Caco-2 (cell line): ENCODE measurements at regions of chr1 and their contacts with region 1.

Region 1: GRCh38 chr1:236753516-236753915 is 41.6 kb upstream of the MTR start:
- DNase-seq: peak; percentile 50 to 53
- H3K4me3 ChIP-seq: no peak overlapping the region
- H3K4me3 Mint-ChIP-seq: no peak overlapping the region
- H3K27ac Mint-ChIP-seq: no peak overlapping the region
- H3K4me1 ChIP-seq: no peaks in the 10 kb centered on the region
- H3K4me1 Mint-ChIP-seq: no peaks in the 10 kb centered on the region
- H3K27me3 ChIP-seq: no peaks in the 10 kb centered on the region
- H3K27me3 Mint-ChIP-seq: peaks cover 5% of the 10 kb centered on the region
- CTCF ChIP-seq: peak; percentile 24 to 32

Region 2: GRCh38 chr1:236741753-236742152 is 11.8 kb before region 1 on chr1:
- CTCF ChIA-PET with region 1: no interaction called
- POLR2A ChIA-PET with region 1: no interaction called
- intact Hi-C with region 1: no loop called
- DNase-seq: no peak
- H3K4me3 ChIP-seq: no peak overlapping the region
- H3K4me3 Mint-ChIP-seq: no peak overlapping the region
- H3K27ac Mint-ChIP-seq: no peak overlapping the region
- H3K4me1 ChIP-seq: no peaks in the 10 kb centered on the region
- H3K4me1 Mint-ChIP-seq: no peaks in the 10 kb centered on the region
- H3K27me3 ChIP-seq: no peaks in the 10 kb centered on the region
- H3K27me3 Mint-ChIP-seq: no peaks in the 10 kb centered on the region
- CTCF ChIP-seq: no peak

Region 3: DNA sequence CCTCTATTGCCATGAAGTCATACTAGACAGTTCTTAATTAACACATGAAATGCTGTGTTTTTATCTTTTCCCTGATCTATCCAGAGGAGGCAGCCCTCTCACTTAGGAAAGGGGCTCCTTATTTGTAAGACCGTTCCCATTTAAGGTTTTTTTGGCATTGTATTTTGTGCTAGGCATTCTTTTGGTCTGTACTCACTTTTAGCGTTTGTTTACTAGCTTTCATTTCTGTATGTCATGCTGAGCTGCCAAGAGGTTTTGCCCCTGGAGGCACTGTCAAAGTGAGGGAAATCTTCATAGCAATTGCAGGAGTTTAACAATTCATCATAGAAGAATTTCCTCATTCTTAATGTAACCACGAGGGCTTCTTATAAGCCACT is 101.1 kb after region 1 on chr1:
- CTCF ChIA-PET with region 1: no interaction called
- POLR2A ChIA-PET with region 1: no interaction called
- intact Hi-C with region 1: no loop called
- DNase-seq: no peak
- H3K4me3 ChIP-seq: no peak overlapping the region
- H3K4me3 Mint-ChIP-seq: no peak overlapping the region
- H3K27ac Mint-ChIP-seq: no peak overlapping the region
- H3K4me1 ChIP-seq: no peaks in the 10 kb centered on the region
- H3K4me1 Mint-ChIP-seq: no peaks in the 10 kb centered on the region
- H3K27me3 ChIP-seq: no peaks in the 10 kb centered on the region
- H3K27me3 Mint-ChIP-seq: no peaks in the 10 kb centered on the region
- CTCF ChIP-seq: no peak

Region 4: DNA sequence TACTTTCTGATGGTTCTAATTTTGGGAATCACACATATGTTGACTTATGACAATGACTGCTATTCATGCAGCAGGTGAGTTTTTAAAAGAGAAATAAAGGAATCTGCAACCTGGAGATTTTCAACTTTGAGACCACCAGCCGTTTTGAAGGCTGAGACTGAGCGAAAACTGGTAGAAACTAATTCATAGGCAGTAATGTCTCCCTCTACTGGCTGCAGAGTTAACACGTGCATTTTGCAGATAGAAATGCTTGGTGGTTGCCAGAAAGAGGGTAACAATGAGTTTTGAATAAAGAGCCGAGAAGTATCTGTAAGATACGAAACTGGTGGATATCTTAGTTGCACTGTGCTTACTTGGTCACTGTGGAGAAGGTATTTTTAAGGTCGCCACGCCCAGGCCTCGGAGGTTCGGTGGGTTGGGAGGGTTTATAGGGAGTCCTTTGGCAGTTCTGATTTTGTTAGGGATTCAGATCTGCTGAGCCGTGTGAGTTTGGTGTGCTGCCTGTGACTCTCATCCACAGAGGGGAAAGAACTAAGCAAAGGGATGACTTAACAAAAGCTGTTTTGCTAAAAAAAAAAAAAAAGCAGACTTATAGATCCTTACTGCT is 371.4 kb after region 1 on chr1:
- CTCF ChIA-PET with region 1: no interaction called
- POLR2A ChIA-PET with region 1: no interaction called
- intact Hi-C with region 1: loop called (anchors 1 kb)
- DNase-seq: peak in 1 of 2 experiments; percentile 13
- H3K4me3 ChIP-seq: no peak overlapping the region
- H3K4me3 Mint-ChIP-seq: no peak overlapping the region
- H3K27ac Mint-ChIP-seq: no peak overlapping the region
- H3K4me1 ChIP-seq: no peaks in the 10 kb centered on the region
- H3K4me1 Mint-ChIP-seq: no peaks in the 10 kb centered on the region
- H3K27me3 ChIP-seq: no peaks in the 10 kb centered on the region
- H3K27me3 Mint-ChIP-seq: peaks cover 3% of the 10 kb centered on the region
- CTCF ChIP-seq: peak in 1 of 2 experiments; percentile 41

Region 5: GRCh38 chr1:237562242-237562823 is 808.8 kb after region 1 on chr1:
- CTCF ChIA-PET with region 1: interaction called, 5 read pairs
- POLR2A ChIA-PET with region 1: no interaction called
- intact Hi-C with region 1: loop called (anchors 5 kb)
- DNase-seq: peak in 1 of 2 experiments; percentile 55
- H3K4me3 ChIP-seq: no peak overlapping the region
- H3K4me3 Mint-ChIP-seq: no peak overlapping the region
- H3K27ac Mint-ChIP-seq: no peak overlapping the region
- H3K4me1 ChIP-seq: no peaks in the 10 kb centered on the region
- H3K4me1 Mint-ChIP-seq: peaks cover 6% of the 10 kb centered on the region
- H3K27me3 ChIP-seq: no peaks in the 10 kb centered on the region
- H3K27me3 Mint-ChIP-seq: peaks cover 9% of the 10 kb centered on the region
- CTCF ChIP-seq: peak; percentile 46 to 48